Mammary epithelial cell (primary cell): ENCODE measurements at regions of chr17 and their contacts with region 1.

Region 1: DNA sequence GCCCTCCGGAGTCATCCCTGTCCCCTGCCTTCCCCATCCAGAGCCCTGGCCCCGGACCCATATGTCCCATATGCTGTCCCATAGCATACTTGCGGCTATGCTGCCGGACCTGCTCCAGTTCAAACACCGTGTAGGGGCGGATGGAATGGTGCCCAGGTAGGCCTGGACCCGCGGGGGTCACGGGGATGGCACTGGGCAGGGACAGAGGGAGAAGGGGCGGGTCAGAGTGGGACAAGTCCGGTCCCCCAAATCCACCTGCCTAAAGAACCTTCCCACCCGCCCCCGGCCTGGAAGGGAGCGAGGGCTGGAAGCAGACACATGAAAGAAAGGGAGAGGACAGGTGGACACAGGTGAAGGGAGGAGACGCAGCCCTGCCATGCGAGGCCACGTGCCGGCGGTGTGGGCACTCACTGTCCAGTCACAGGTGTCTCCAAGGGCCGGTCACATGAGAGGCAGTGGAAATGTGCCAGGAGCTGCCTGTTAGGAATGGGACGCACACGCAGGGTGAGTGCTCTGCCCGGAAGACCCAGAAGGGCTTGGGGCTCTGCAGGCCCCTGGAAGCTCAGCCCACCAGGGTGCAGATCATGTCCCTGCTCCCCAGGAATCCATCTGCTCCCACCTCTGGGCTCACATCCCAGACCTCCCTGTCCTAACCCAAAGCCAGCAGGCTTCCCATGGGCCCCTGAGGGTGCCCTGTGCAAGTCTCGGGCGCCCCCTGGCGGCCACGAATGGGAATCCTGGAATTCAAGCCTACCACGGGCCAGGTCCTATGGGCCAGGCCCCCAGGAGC is 14.0 kb downstream of the UBALD2 start:
- DNase-seq: peak; percentile 51
- H3K4me3 ChIP-seq: no peak overlapping the region
- H3K27ac ChIP-seq: no peak overlapping the region
- H3K4me1 ChIP-seq: peaks cover 4% of the 10 kb centered on the region
- H3K27me3 ChIP-seq: no peaks in the 10 kb centered on the region
- CTCF ChIP-seq: peak; percentile 72 to 99

Region 2: GRCh38 chr17:76182016-76182764 is 97.0 kb before region 1 on chr17:
- CTCF ChIA-PET with region 1: interaction called, 6 read pairs
- dilution Hi-C with region 1: no loop called
- in situ Hi-C with region 1: no loop called
- intact Hi-C with region 1: loop called (anchors 2 kb)
- DNase-seq: peak; percentile 82
- H3K4me3 ChIP-seq: no peak overlapping the region
- H3K27ac ChIP-seq: no peak overlapping the region
- H3K4me1 ChIP-seq: no peaks in the 10 kb centered on the region
- H3K27me3 ChIP-seq: no peaks in the 10 kb centered on the region
- CTCF ChIP-seq: peak; percentile 91 to 97

Region 3: DNA sequence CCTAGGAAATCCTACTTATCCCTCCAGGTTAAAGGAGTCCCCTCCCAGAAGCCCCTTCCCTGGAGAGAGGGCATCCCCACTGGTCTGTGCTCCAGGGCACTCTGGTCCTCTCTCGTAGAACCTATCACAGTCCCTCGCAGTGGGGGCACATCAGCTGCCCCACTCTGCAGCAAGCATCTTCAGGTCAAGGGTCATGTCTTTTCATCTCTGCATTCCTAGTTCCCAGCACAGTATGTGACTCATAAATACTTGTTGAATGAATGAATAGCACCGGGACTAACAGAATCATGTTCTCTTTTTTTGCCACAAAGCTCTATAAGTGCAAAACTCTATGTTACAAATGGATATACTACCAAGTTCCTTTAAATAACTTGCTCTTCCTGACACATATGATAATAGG is 74.9 kb before region 1 on chr17:
- CTCF ChIA-PET with region 1: no interaction called
- dilution Hi-C with region 1: no loop called
- in situ Hi-C with region 1: no loop called
- intact Hi-C with region 1: loop called (anchors 5 kb)
- DNase-seq: peak; percentile 47
- H3K4me3 ChIP-seq: no peak overlapping the region
- H3K27ac ChIP-seq: no peak overlapping the region
- H3K4me1 ChIP-seq: peaks cover 9% of the 10 kb centered on the region
- H3K27me3 ChIP-seq: no peaks in the 10 kb centered on the region
- CTCF ChIP-seq: no peak

Region 4: DNA sequence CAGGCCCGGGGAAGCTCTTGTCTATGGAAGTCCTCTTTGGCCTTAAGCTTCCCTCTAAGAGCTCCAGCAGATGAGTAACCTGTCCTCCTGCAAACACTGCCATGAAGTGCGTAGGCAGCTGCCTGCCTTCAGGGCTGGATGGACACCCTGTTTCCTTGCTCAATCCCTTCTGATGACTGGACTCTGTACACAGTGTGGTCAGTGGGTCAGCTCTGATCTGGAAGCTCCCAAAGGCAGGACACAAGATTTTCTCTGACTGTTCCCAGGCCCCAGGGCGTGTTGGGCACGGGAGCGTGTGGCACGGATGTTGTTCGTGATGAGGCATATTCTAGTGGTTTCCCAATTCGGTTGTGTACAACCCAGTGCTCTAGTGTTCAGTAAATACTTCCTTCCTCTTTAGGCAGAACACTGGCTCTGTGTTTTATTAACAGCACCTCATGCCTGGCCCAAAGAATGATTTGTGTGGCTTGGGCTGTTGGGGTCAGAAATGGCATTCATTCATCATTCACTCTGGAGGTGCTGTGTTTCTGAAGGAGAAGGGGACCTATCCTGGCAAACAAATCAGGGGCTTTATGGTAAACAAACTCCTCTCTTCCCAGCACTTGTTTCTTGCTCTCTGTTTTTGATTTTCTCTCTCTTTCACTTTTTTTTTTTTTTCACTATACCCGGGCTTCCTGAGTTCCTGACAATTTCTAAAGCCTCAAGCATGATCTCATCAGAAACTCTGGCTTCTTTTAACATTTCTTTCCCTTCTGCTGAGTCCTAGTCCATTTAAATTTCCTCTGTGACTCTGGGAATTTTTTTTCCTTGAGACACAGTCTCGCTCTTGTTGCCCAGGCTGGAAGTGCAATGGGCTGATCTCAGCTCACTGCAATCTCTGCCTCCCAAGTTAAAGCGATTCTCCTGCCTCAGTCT is 26.9 kb before region 1 on chr17:
- CTCF ChIA-PET with region 1: no interaction called
- dilution Hi-C with region 1: no loop called
- in situ Hi-C with region 1: no loop called
- intact Hi-C with region 1: loop called (anchors 1 kb)
- DNase-seq: peak; percentile 100
- H3K4me3 ChIP-seq: no peak overlapping the region
- H3K27ac ChIP-seq: peak overlapping the region; percentile 38
- H3K4me1 ChIP-seq: peaks cover 20% of the 10 kb centered on the region
- H3K27me3 ChIP-seq: no peaks in the 10 kb centered on the region
- CTCF ChIP-seq: no peak

Region 5: GRCh38 chr17:76264755-76265596 is 14.2 kb before region 1 on chr17 and contains the start of gene UBALD2:
- CTCF ChIA-PET with region 1: interaction called, 14 read pairs
- dilution Hi-C with region 1: no loop called
- in situ Hi-C with region 1: no loop called
- intact Hi-C with region 1: no loop called
- DNase-seq: peak; percentile 100
- H3K4me3 ChIP-seq: peak within 1 kb of the TSS; percentile 71 to 81 (median 80)
- H3K27ac ChIP-seq: peak within 1 kb of the TSS; percentile 70
- H3K4me1 ChIP-seq: peaks cover 57% of the 10 kb centered on the region
- H3K27me3 ChIP-seq: no peaks in the 10 kb centered on the region
- CTCF ChIP-seq: no peak
- total RNA-seq, gene UBALD2: 5.7 to 54.7 TPM